ENCODE measurements at regions of chr18 and their contacts with region 1.

Region 1: GRCh38 chr18:76398896-76399612 is 96.0 kb downstream of the ZNF516 start:
- DNase-seq: peak; percentile 77
- ATAC-seq: peak; percentile 87
- H3K4me3 ChIP-seq: no peak overlapping the region
- H3K27ac ChIP-seq: no peak overlapping the region
- H3K4me1 ChIP-seq: peaks cover 6% of the 10 kb centered on the region
- H3K27me3 ChIP-seq: no peaks in the 10 kb centered on the region
- CTCF ChIP-seq: peak; percentile 96
- POLR2A ChIP-seq: 0 out of 2 replicates have a peak, but pooled peaks have one; percentile 32
- RAD21 ChIP-seq: peak; percentile 99

Region 2: GRCh38 chr18:76620321-76621170 is 221.5 kb after region 1 on chr18:
- CTCF ChIA-PET with region 1: no interaction called
- POLR2A ChIA-PET with region 1: no interaction called
- dilution Hi-C with region 1: no loop called
- in situ Hi-C with region 1: loop called (anchors 5 kb)
- intact Hi-C with region 1: loop called (anchors 1 kb)
- DNase-seq: peak; percentile 77
- ATAC-seq: peak; percentile 88
- H3K4me3 ChIP-seq: peak overlapping the region; percentile 15; the same call in 1 of the 2 replicates
- H3K27ac ChIP-seq: peak overlapping the region; percentile 55
- H3K4me1 ChIP-seq: peaks cover 19% of the 10 kb centered on the region
- H3K27me3 ChIP-seq: no peaks in the 10 kb centered on the region
- CTCF ChIP-seq: peak; percentile 66
- POLR2A ChIP-seq: no peak
- RAD21 ChIP-seq: peak; percentile 62

Region 3: GRCh38 chr18:76686737-76687262 is 287.7 kb after region 1 on chr18:
- CTCF ChIA-PET with region 1: interaction called, 14 read pairs
- POLR2A ChIA-PET with region 1: no interaction called
- dilution Hi-C with region 1: no loop called
- in situ Hi-C with region 1: loop called (anchors 5 kb)
- intact Hi-C with region 1: loop called (anchors 1 kb)
- DNase-seq: peak; percentile 57
- ATAC-seq: peak; percentile 97
- H3K4me3 ChIP-seq: no peak overlapping the region
- H3K27ac ChIP-seq: no peak overlapping the region
- H3K4me1 ChIP-seq: no peaks in the 10 kb centered on the region; the same call in 1 of the 2 replicates
- H3K27me3 ChIP-seq: peaks cover 44% of the 10 kb centered on the region
- CTCF ChIP-seq: peak; percentile 73
- POLR2A ChIP-seq: no peak
- RAD21 ChIP-seq: peak; percentile 80

Region 4: GRCh38 chr18:76709659-76710645 is 310.9 kb after region 1 on chr18:
- CTCF ChIA-PET with region 1: interaction called, 6 read pairs
- POLR2A ChIA-PET with region 1: no interaction called
- dilution Hi-C with region 1: no loop called
- in situ Hi-C with region 1: no loop called
- intact Hi-C with region 1: loop called (anchors 1 kb)
- DNase-seq: peak; percentile 65
- ATAC-seq: peak; percentile 99
- H3K4me3 ChIP-seq: no peak overlapping the region
- H3K27ac ChIP-seq: no peak overlapping the region
- H3K4me1 ChIP-seq: no peaks in the 10 kb centered on the region
- H3K27me3 ChIP-seq: no peaks in the 10 kb centered on the region; the same call in 1 of the 2 replicates
- CTCF ChIP-seq: peak; percentile 97
- POLR2A ChIP-seq: peak; percentile 43; the same call in 1 of the 2 replicates
- RAD21 ChIP-seq: peak; percentile 98

Measured in IMR-90 (cell line).